K562 (cell line): ENCODE measurements at regions of chr1 and their contacts with region 1.

Region 1: DNA sequence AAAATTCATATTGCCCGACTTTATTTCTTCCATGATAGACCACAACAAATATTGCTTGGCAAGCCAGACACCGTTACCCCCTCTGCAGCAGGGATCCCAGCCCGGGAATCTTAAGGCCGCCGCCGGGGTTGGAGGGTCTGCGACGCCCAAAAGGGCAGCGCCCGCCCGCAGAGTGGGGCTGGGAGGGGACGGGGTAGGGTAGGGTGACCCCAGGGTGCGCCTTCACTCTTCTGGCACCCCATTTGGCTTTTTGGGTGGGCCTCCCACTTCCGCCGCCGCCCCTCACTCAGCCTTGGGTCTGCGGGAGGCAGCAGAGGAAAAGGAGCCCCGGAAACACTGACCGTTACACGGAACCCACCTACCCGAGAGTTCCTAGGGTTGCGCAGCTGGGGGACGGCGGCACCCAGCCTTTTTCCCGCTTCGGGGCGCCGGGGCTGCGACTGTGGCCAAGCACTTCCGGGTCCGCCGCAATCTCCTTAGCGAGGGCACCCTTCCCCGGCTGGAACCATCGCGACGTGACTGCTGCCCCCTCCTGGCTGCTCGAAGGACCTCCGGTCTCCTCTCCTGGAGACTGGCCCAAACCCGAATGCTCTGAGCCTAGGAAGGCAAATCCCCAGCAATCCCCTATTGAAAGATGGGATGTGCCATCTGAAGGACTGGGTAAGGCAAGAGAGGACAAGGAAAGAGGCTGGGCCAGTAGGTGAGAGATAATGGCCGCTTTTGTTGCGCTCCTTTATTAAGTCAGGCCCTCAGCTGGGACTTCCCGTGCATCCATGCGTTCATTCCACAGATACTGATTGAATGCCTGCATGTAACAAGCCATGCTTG is at the start of gene PIGC:
- DNase-seq: peak; percentile 95 to 98 (median 97)
- ATAC-seq: peak; percentile 98
- H3K4me3 ChIP-seq: peak within 1 kb of the TSS; percentile 80
- H3K27ac ChIP-seq: peak within 1 kb of the TSS; percentile 87
- H3K4me1 ChIP-seq: peaks cover 24 to 34% of the 10 kb centered on the region in 2 experiments
- H3K27me3 ChIP-seq: no peaks in the 10 kb centered on the region
- CTCF ChIP-seq: peak; percentile 94 to 97 (median 96)
- EP300 ChIP-seq: no peak
- POLR2A ChIP-seq: peak; percentile 88
- RAD21 ChIP-seq: peak; percentile 87 to 90
- polyA plus RNA-seq, gene PIGC: 92.9 to 97.9 TPM

Region 2: DNA sequence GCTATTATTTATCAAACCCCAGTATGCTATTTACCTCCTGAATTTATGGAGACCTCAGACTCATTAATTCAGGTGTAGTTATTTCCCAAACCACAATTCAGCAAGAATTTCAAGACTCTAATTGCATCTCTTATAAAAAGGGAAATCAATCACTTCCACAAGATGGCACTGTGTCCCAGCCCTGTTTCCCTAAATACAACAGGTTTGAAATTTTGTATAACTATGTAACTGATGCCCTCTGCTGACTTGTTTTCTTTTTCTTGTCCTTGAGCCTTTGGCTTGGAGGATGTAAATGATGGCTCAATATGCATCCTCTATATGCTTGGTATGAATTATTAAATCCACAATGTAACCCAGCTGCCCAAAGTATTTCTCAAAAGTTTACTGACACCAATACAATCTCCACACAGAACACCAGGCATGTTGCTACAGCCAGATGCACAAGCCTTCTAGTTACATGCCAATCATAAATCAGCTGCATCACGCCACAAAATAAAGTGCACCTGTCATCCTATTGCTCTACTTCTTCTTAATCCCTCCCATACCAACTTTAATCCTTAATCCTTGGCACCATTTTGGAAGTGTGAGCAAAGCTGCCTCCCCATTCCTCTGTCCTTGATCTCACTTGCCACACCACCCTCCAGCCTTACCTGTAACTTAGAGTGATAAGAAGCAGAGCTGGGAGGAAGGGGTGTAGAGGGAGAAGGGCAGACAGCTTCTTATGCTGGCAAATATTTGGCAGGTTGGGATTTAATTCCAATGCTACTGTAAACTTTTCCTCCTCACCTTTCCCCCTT is 14.3 kb before region 1 on chr1:
- CTCF ChIA-PET with region 1: interaction called, 11 read pairs
- POLR2A ChIA-PET with region 1: interaction called, 7 read pairs
- in situ Hi-C with region 1: no loop called
- intact Hi-C with region 1: loop called (anchors 1 kb)
- DNase-seq: peak; percentile 45 to 80 (median 55)
- ATAC-seq: peak; percentile 82
- H3K4me3 ChIP-seq: no peak overlapping the region
- H3K27ac ChIP-seq: no peak overlapping the region
- H3K4me1 ChIP-seq: peaks cover 0 to 25% of the 10 kb centered on the region in 2 experiments; a peak in 2 of 5 replicates
- H3K27me3 ChIP-seq: no peaks in the 10 kb centered on the region
- CTCF ChIP-seq: peak; percentile 83 to 99 (median 94)
- EP300 ChIP-seq: no peak
- POLR2A ChIP-seq: no peak
- RAD21 ChIP-seq: peak; percentile 93 to 99